Mammary epithelial cell (primary cell): ENCODE measurements at regions of chr1 and their contacts with region 1.

Region 1: GRCh38 chr1:6245086-6245868 is 1.3 kb downstream of the HES3 start:
- DNase-seq: peak; percentile 77
- H3K4me3 ChIP-seq: peak overlapping the region; percentile 30 to 39 (median 33)
- H3K27ac ChIP-seq: no peak overlapping the region
- H3K4me1 ChIP-seq: peaks cover 18% of the 10 kb centered on the region
- H3K27me3 ChIP-seq: peaks cover 20% of the 10 kb centered on the region
- CTCF ChIP-seq: peak; percentile 71 to 93

Region 2: GRCh38 chr1:5992026-5992813 is 253.1 kb before region 1 on chr1 and contains the start of gene NPHP4:
- CTCF ChIA-PET with region 1: no interaction called
- dilution Hi-C with region 1: no loop called
- in situ Hi-C with region 1: no loop called
- intact Hi-C with region 1: no loop called
- DNase-seq: peak; percentile 100
- H3K4me3 ChIP-seq: peak within 1 kb of the TSS; percentile 75 to 85 (median 84)
- H3K27ac ChIP-seq: peak within 1 kb of the TSS; percentile 89
- H3K4me1 ChIP-seq: peaks cover 18% of the 10 kb centered on the region
- H3K27me3 ChIP-seq: no peaks in the 10 kb centered on the region
- CTCF ChIP-seq: no peak
- total RNA-seq, gene NPHP4: 8.2 to 18.4 TPM

Region 3: DNA sequence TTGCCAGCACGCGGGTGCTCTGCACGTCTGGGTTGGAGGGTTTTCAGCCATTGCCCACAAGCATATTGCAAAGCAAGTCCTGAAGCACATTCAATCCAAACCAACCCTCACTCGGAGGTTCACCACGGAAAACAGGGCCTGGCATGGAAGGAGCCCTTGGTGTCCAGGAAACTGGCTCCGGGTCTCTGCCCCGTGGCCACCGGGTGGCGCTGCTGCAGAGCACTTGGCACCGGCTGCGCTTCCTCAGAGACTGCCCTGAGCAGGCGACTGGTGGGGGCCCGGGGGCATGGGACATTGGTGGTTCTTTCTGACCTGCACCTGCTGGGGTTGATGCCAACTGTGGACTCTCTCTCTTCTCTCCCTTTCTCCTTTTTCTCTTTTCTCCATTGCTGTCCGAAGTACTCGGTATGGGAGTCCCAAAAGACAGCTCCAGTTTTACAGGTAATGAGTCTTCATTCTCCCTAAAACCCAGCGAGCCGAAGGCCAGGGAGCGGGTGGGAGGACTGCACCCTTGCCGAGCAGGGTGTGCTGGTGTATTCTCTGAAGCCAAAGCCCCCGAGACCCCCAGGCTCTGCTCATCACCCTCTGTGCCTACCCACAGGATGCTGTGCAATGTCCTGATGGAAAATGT is 203.7 kb before region 1 on chr1:
- CTCF ChIA-PET with region 1: no interaction called
- dilution Hi-C with region 1: no loop called
- in situ Hi-C with region 1: no loop called
- intact Hi-C with region 1: loop called (anchors 1 kb)
- DNase-seq: peak; percentile 19
- H3K4me3 ChIP-seq: no peak overlapping the region
- H3K27ac ChIP-seq: no peak overlapping the region
- H3K4me1 ChIP-seq: no peaks in the 10 kb centered on the region
- H3K27me3 ChIP-seq: no peaks in the 10 kb centered on the region
- CTCF ChIP-seq: peak; percentile 53 to 65

Region 4: GRCh38 chr1:6343506-6344405 is 98.5 kb after region 1 on chr1:
- CTCF ChIA-PET with region 1: interaction called, 3 read pairs
- dilution Hi-C with region 1: no loop called
- in situ Hi-C with region 1: loop called in 1 of 2 experiments (anchors 5 kb)
- intact Hi-C with region 1: loop called (anchors 1 kb)
- DNase-seq: peak; percentile 94
- H3K4me3 ChIP-seq: no peak overlapping the region
- H3K27ac ChIP-seq: no peak overlapping the region
- H3K4me1 ChIP-seq: peaks cover 33% of the 10 kb centered on the region
- H3K27me3 ChIP-seq: no peaks in the 10 kb centered on the region
- CTCF ChIP-seq: peak; percentile 97 to 100

Region 5: DNA sequence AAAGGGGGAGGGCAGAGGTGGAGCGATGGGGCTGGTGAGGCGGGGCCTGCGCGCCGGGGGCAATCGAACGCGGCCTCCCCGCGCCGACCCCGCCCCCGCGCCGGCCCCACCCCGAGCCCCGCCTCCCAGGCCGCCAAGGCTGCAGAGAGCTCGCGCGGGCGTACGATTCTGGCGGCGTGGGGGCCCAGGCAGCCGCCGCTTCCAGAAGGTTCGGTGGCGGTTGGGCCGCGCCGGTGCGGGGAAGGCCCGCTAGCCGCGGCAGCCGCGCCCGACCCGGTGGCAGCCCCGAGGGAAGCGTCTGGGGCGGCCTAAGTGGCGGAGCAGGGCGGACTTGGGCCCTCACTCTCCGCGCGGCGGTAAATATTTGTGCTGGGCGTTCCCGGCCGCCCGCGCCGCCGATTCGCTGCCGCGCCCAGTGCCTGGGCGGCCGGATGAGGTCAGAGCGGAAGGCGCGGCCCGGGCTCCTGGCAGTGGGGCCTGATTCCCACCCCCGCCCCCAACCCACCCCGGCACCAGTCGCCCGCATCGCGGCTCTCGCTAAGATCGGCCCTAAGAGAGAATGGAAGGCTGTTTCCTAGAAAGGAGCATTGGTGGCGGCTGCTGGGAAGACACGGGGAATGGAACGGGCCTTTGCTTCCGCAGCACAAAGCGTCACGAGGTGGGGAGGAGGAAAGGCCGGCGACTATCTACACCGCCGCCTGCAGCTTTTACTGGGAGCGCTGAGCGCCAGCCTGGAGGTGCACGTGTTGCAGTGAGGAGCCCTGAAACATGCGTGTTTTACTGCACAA is 148.3 kb after region 1 on chr1 and contains the start of gene ACOT7:
- CTCF ChIA-PET with region 1: no interaction called
- dilution Hi-C with region 1: no loop called
- in situ Hi-C with region 1: no loop called
- intact Hi-C with region 1: loop called (anchors 1 kb)
- DNase-seq: peak; percentile 92
- H3K4me3 ChIP-seq: peak within 1 kb of the TSS; percentile 67 to 73 (median 73)
- H3K27ac ChIP-seq: peak within 1 kb of the TSS; percentile 64
- H3K4me1 ChIP-seq: peaks cover 27% of the 10 kb centered on the region
- H3K27me3 ChIP-seq: no peaks in the 10 kb centered on the region
- CTCF ChIP-seq: peak in 1 of 2 donors; percentile 49
- total RNA-seq, gene ACOT7: 67.2 to 193 TPM

Region 6: DNA sequence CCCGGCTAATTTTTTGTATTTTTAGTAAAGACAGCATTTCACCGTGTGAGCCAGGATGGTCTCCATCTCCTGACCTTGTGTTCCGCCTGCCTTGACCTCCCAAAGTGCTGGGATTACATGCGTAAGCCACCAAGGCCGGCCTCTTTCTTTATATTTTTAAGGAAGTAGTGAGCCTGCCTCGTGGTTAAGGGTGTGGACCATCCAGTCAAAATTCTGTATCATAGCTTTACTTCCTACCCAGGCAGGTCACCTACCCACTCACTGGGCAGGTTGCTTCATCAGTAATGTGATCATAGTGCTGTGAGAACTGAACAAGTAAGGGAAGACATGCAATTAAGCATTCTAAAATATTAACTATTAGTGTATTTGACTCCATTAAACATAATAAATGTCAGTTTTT is 156.4 kb after region 1 on chr1:
- CTCF ChIA-PET with region 1: no interaction called
- dilution Hi-C with region 1: no loop called
- in situ Hi-C with region 1: loop called (anchors 10 to 25 kb)
- intact Hi-C with region 1: loop called (anchors 1 kb)
- DNase-seq: peak; percentile 67
- H3K4me3 ChIP-seq: no peak overlapping the region
- H3K27ac ChIP-seq: no peak overlapping the region
- H3K4me1 ChIP-seq: no peaks in the 10 kb centered on the region
- H3K27me3 ChIP-seq: no peaks in the 10 kb centered on the region
- CTCF ChIP-seq: no peak